ENCODE measurements at regions of chr1 and their contacts with region 1.

Region 1: DNA sequence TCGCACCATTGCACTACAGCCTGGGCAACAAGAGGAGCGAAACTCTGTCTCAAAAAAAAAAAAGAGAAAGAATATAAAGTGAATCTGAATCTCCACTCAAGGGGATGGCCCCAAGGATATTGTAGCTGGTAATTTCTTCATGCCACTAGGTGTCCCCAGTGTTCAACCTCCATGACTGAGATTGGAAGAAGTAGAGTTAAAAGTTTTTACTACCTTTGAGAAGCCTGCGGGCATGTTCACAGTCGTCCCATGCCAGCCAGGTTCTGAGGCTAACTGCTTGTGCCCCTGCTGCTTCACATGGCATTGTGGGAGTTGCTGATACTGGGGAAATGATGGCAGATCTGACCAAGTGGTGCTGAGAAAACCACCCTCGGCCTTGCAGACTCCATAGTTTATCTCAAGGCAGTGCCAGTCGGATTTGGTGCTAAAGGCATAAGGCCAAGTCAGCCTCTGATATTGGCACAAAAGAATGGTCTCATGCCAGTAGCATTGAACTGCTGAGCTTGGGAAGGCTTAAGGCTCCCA is 10.8 kb upstream of the SHISA4 start:
- DNase-seq: peak; percentile 72
- H3K4me3 ChIP-seq: no peak overlapping the region
- H3K27ac ChIP-seq: no peak overlapping the region
- H3K4me1 ChIP-seq: no peaks in the 10 kb centered on the region
- H3K27me3 ChIP-seq: no peaks in the 10 kb centered on the region
- CTCF ChIP-seq: peak; percentile 69

Region 2: DNA sequence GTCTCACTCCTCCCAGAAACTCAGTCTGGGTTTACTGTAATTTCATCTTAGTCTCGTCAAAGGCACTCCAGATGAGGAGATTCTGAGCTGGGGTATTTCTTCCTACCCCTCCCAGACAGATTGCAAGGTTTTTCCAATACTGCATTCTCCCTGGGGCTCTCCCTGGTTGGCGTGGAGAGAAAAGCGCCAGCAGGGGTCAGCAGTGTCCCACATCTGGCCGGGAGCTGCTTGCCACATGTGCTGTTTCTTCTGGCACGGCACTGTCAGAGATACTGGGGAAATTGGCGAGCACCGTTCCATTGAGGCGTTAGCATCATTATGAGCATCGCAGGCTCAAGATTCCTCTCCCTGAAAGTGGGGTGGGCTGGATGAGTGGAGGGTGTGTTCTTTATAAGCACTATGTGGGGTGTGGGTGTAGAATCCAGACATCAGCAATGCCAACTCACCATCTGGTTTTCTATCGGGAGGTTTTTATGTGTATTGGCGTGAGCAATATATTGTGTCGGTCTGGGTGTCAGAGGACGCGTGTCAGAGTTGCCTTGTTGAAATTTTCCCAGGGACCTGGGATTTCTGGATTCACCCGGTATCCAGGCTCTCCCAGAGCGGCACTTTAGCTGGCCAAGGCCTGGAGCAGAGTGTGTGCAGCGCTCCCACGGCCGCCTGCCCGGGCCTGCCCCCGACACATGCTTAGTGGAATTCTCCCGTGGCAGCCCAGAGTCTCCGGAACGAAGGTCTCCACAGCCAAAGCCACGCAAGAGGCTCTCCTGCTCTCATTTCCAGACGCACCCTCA is 347.0 kb before region 1 on chr1:
- CTCF ChIA-PET with region 1: no interaction called
- POLR2A ChIA-PET with region 1: no interaction called
- intact Hi-C with region 1: loop called (anchors 10 kb)
- DNase-seq: peak; percentile 91
- H3K4me3 ChIP-seq: no peak overlapping the region
- H3K27ac ChIP-seq: no peak overlapping the region
- H3K4me1 ChIP-seq: peaks cover 33% of the 10 kb centered on the region
- H3K27me3 ChIP-seq: no peaks in the 10 kb centered on the region
- CTCF ChIP-seq: peak; percentile 94

Region 3: DNA sequence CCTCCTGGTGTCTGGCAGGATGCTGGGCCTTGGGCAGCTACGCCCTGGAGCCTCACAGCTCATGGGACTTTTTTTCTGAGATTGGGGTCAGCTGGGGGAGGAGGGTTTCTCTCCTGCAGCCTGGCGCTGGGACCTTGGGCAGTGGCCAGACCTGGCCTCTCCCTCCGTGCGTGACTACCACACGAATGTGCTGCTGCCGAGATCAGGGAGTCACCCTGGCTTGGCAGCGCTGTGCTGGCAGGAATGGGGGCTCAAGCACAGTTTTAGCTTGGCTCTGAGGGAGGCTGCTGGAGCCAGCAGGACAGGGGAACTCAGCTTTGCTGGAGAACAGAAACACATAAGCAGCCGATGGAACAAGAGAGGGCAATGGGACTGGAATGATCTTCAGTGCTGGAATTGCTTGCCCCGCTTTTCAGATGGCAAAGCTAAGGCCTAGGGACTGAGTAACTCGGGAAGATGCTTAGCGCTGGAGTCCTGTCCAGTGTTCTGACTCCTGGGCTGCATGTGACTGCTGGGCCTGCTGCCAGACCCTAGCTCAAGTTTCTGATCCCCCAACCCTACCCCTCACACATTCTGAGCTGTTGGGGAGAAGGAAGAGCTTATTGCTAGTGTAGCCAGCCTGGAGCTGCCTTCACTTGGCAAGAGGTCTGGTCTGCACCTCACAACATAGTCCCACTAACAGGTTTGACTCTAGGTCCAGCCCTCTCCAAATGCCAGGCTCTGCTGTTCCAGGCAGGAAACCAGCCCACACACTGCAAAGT is 269.1 kb before region 1 on chr1:
- CTCF ChIA-PET with region 1: no interaction called
- POLR2A ChIA-PET with region 1: no interaction called
- intact Hi-C with region 1: no loop called
- DNase-seq: no peak
- H3K4me3 ChIP-seq: no peak overlapping the region
- H3K27ac ChIP-seq: no peak overlapping the region
- H3K4me1 ChIP-seq: no peaks in the 10 kb centered on the region
- H3K27me3 ChIP-seq: no peaks in the 10 kb centered on the region
- CTCF ChIP-seq: no peak